SK-N-SH (cell line): ENCODE measurements at regions of chr5 and their contacts with region 1.

Region 1: GRCh38 chr5:31825518-31826068 is 186.7 kb downstream of the PDZD2 start:
- DNase-seq: peak; percentile 56
- H3K4me3 ChIP-seq: no peak overlapping the region
- H3K27ac ChIP-seq: no peak overlapping the region
- H3K4me1 ChIP-seq: peaks cover 0 to 7% of the 10 kb centered on the region in 2 experiments; a peak in 1 of 4 replicates
- H3K27me3 ChIP-seq: no peaks in the 10 kb centered on the region; the same call in 1 of the 2 replicates
- CTCF ChIP-seq: peak; percentile 75
- EP300 ChIP-seq: no peak
- RAD21 ChIP-seq: peak; percentile 93

Region 2: GRCh38 chr5:31638748-31639418 is 186.7 kb before region 1 on chr5 and contains the start of gene PDZD2:
- CTCF ChIA-PET with region 1: interaction called, 29 read pairs
- POLR2A ChIA-PET with region 1: no interaction called
- DNase-seq: peak; percentile 95
- H3K4me3 ChIP-seq: peak within 1 kb of the TSS; percentile 60 to 93
- H3K27ac ChIP-seq: peak within 1 kb of the TSS in 1 of 2 experiments; percentile 83; a peak in 2 of 4 replicates
- H3K4me1 ChIP-seq: peaks cover 0 to 20% of the 10 kb centered on the region in 2 experiments; a peak in 1 of 4 replicates
- H3K27me3 ChIP-seq: peaks cover 33% of the 10 kb centered on the region
- CTCF ChIP-seq: peak; percentile 53
- EP300 ChIP-seq: peak in 1 of 2 experiments; percentile 10; a peak in 1 of 4 replicates
- RAD21 ChIP-seq: peak; percentile 59
- polyA plus RNA-seq, gene PDZD2: 0.06 and 0.13 TPM in 2 replicates

Region 3: DNA sequence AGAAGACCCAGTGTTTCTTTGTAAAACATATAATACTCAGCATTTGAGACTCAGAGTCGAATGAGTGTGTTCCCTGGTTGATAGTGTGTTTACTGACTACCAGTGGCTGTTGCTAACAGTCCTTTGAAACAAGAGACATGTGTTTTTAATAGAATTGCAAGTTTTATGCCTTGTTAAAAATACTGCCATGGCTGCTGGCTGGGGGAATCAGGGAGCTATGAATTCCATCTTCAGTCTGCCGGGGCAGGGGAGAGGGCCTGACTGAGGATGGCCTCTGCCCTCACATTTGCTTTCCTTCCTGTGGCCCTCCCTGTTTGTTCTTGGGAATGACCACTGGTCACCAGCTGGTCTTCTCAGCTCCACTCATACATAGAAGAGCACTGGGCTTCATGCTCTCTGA is 122.9 kb before region 1 on chr5:
- CTCF ChIA-PET with region 1: no interaction called
- POLR2A ChIA-PET with region 1: no interaction called
- DNase-seq: peak; percentile 40
- H3K4me3 ChIP-seq: no peak overlapping the region
- H3K27ac ChIP-seq: peak overlapping the region in 1 of 2 experiments; percentile 99; a peak in 2 of 4 replicates
- H3K4me1 ChIP-seq: peaks cover 0 to 26% of the 10 kb centered on the region in 2 experiments; a peak in 2 of 4 replicates
- H3K27me3 ChIP-seq: peaks cover 14% of the 10 kb centered on the region; the same call in 1 of the 2 replicates
- CTCF ChIP-seq: no peak
- EP300 ChIP-seq: no peak
- RAD21 ChIP-seq: no peak; the same call in 1 of the 2 replicates

Region 4: DNA sequence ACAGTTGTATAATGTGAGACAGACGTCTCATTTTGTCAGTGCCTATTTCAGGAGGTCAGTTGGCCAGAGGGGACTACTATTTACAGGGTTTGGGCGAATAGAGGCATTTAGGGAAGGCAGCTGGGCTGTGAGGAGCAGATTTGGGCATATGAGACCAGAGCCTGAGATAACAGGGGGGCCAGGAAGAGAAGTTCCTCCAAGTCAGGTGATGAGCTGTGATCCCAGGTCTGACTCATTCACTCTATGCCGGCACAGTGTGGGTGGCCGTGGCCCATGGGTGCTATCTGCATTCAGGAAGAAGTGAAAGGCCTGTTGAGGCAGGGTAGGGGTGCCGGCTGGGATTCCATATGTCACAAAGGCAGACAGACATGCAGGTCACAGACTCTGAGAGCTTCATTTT is 43.8 kb before region 1 on chr5:
- CTCF ChIA-PET with region 1: no interaction called
- POLR2A ChIA-PET with region 1: no interaction called
- DNase-seq: no peak
- H3K4me3 ChIP-seq: no peak overlapping the region
- H3K27ac ChIP-seq: no peak overlapping the region
- H3K4me1 ChIP-seq: peaks cover 0 to 13% of the 10 kb centered on the region in 2 experiments; a peak in 1 of 4 replicates
- H3K27me3 ChIP-seq: no peaks in the 10 kb centered on the region; the same call in 1 of the 2 replicates
- CTCF ChIP-seq: no peak
- EP300 ChIP-seq: no peak
- RAD21 ChIP-seq: no peak

Region 5: GRCh38 chr5:31839005-31839404 is 13.4 kb after region 1 on chr5:
- CTCF ChIA-PET with region 1: interaction called, 14 read pairs
- POLR2A ChIA-PET with region 1: no interaction called
- DNase-seq: no peak
- H3K4me3 ChIP-seq: no peak overlapping the region
- H3K27ac ChIP-seq: no peak overlapping the region
- H3K4me1 ChIP-seq: no peaks in the 10 kb centered on the region
- H3K27me3 ChIP-seq: no peaks in the 10 kb centered on the region; the same call in 1 of the 2 replicates
- CTCF ChIP-seq: no peak
- EP300 ChIP-seq: no peak
- RAD21 ChIP-seq: no peak

Region 6: DNA sequence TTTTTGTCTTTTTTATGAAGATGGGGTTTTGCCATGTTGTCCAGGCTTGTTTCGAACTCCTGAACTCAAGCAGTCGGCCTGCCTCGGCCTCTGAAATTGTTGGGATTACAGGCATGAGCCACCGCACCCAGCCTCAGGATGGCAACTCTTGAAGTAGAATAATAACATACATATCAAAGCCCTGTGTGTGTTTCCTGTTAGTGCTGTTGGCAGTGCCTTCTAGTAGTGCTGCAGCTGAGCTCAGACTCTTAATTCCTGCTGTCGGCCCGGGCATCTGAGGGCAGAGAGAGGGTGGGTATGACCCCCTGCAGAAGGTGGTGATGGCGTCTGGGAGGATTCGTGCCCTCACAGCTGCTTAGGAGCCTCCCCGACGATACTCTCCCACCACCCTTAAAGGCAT is 40.6 kb after region 1 on chr5:
- CTCF ChIA-PET with region 1: interaction called, 12 read pairs
- POLR2A ChIA-PET with region 1: no interaction called
- DNase-seq: no peak
- H3K4me3 ChIP-seq: no peak overlapping the region
- H3K27ac ChIP-seq: no peak overlapping the region
- H3K4me1 ChIP-seq: peaks cover 0 to 22% of the 10 kb centered on the region in 2 experiments; a peak in 1 of 4 replicates
- H3K27me3 ChIP-seq: no peaks in the 10 kb centered on the region; the same call in 1 of the 2 replicates
- CTCF ChIP-seq: no peak
- EP300 ChIP-seq: no peak
- RAD21 ChIP-seq: no peak

Region 7: GRCh38 chr5:32057162-32058096 is 231.8 kb after region 1 on chr5:
- CTCF ChIA-PET with region 1: interaction called, 10 read pairs
- POLR2A ChIA-PET with region 1: no interaction called
- DNase-seq: no peak
- H3K4me3 ChIP-seq: no peak overlapping the region; a peak in 1 of 4 replicates
- H3K27ac ChIP-seq: no peak overlapping the region
- H3K4me1 ChIP-seq: peaks cover 0 to 4% of the 10 kb centered on the region in 2 experiments; a peak in 1 of 4 replicates
- H3K27me3 ChIP-seq: peaks cover 7% of the 10 kb centered on the region; the same call in 1 of the 2 replicates
- CTCF ChIP-seq: peak; percentile 47
- EP300 ChIP-seq: no peak
- RAD21 ChIP-seq: no peak

Region 8: GRCh38 chr5:32071351-32071944 is 245.9 kb after region 1 on chr5:
- CTCF ChIA-PET with region 1: interaction called, 195 read pairs
- POLR2A ChIA-PET with region 1: interaction called, 5 read pairs
- DNase-seq: no peak
- H3K4me3 ChIP-seq: no peak overlapping the region
- H3K27ac ChIP-seq: no peak overlapping the region
- H3K4me1 ChIP-seq: no peaks in the 10 kb centered on the region; a peak in 1 of 4 replicates
- H3K27me3 ChIP-seq: no peaks in the 10 kb centered on the region; the same call in 1 of the 2 replicates
- CTCF ChIP-seq: no peak
- EP300 ChIP-seq: no peak
- RAD21 ChIP-seq: no peak

Region 9: GRCh38 chr5:32092938-32093812 is 267.6 kb after region 1 on chr5:
- CTCF ChIA-PET with region 1: interaction called, 58 read pairs
- POLR2A ChIA-PET with region 1: no interaction called
- DNase-seq: peak; percentile 81
- H3K4me3 ChIP-seq: peak overlapping the region in 1 of 2 experiments; percentile 50; a peak in 1 of 4 replicates
- H3K27ac ChIP-seq: no peak overlapping the region
- H3K4me1 ChIP-seq: peaks cover 0 to 4% of the 10 kb centered on the region in 2 experiments; a peak in 1 of 4 replicates
- H3K27me3 ChIP-seq: no peaks in the 10 kb centered on the region
- CTCF ChIP-seq: peak; percentile 77
- EP300 ChIP-seq: no peak
- RAD21 ChIP-seq: peak; percentile 89